ENCODE measurements at regions of chr7 and their contacts with region 1.

Region 1: GRCh38 chr7:110283082-110283481 is 807.8 kb upstream of the LRRN3 start:
- DNase-seq: peak; percentile 42 to 59
- H3K4me3 ChIP-seq: no peak overlapping the region
- H3K4me3 Mint-ChIP-seq: no peak overlapping the region
- H3K27ac Mint-ChIP-seq: no peak overlapping the region
- H3K4me1 ChIP-seq: peaks cover 30% of the 10 kb centered on the region
- H3K4me1 Mint-ChIP-seq: peaks cover 26% of the 10 kb centered on the region
- H3K27me3 ChIP-seq: no peaks in the 10 kb centered on the region
- H3K27me3 Mint-ChIP-seq: no peaks in the 10 kb centered on the region
- CTCF ChIP-seq: no peak

Region 2: DNA sequence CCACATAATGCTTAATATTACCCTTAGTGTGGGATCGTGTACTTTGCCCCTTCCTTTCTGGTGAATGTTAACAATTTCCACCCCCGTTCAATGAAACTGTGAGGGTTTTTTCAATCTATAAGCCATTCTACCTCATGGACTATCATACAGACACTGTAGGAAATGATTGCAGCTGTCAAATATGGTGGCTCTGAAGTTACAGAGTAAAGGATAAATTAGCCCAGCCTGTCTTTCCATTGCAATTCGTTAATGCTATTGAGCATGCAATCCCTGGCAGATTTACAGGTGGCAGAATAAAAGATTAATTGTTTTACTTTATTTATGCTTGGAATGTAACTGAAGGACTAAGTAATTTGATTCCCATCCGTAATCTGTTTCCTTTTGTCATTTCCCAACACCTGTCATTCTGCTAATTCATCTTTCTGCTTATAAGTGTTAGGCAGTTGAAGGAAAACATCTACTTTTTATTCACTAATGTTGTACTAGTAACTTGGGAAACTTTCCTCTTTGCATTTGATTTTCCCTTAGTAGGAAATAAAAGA is 403.7 kb before region 1 on chr7:
- CTCF ChIA-PET with region 1: no interaction called
- POLR2A ChIA-PET with region 1: no interaction called
- intact Hi-C with region 1: loop called (anchors 1 kb)
- DNase-seq: no peak
- H3K4me3 ChIP-seq: no peak overlapping the region
- H3K4me3 Mint-ChIP-seq: no peak overlapping the region
- H3K27ac Mint-ChIP-seq: no peak overlapping the region
- H3K4me1 ChIP-seq: peaks cover 7% of the 10 kb centered on the region
- H3K4me1 Mint-ChIP-seq: peaks cover 8% of the 10 kb centered on the region
- H3K27me3 ChIP-seq: no peaks in the 10 kb centered on the region
- H3K27me3 Mint-ChIP-seq: no peaks in the 10 kb centered on the region
- CTCF ChIP-seq: no peak

Region 3: GRCh38 chr7:110186331-110186730 is 96.8 kb before region 1 on chr7:
- CTCF ChIA-PET with region 1: no interaction called
- POLR2A ChIA-PET with region 1: no interaction called
- intact Hi-C with region 1: loop called (anchors 5 kb)
- DNase-seq: peak in 1 of 2 experiments; percentile 57
- H3K4me3 ChIP-seq: no peak overlapping the region
- H3K4me3 Mint-ChIP-seq: no peak overlapping the region
- H3K27ac Mint-ChIP-seq: no peak overlapping the region
- H3K4me1 ChIP-seq: peaks cover 10% of the 10 kb centered on the region
- H3K4me1 Mint-ChIP-seq: no peaks in the 10 kb centered on the region
- H3K27me3 ChIP-seq: no peaks in the 10 kb centered on the region
- H3K27me3 Mint-ChIP-seq: no peaks in the 10 kb centered on the region
- CTCF ChIP-seq: no peak

Region 4: DNA sequence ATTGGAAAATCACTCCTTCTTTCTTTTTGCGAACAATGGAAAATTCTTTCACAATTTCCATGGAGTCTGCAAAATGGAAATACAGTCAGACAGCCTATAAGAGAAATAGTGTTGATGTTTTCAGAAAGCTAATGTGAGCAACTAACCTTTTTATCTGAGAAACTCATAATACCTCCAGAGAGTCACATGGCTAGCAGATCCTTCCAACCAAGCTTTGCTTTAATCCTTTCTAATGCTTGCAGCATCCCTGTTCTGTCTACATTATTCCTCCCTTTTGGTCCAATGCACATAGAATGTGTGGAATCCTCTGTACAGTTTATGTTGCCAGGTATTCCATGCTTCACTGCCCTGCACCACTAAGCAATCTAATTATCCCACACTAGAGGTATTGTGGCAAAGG is 90.3 kb after region 1 on chr7:
- CTCF ChIA-PET with region 1: no interaction called
- POLR2A ChIA-PET with region 1: no interaction called
- intact Hi-C with region 1: loop called (anchors 1 kb)
- DNase-seq: no peak
- H3K4me3 ChIP-seq: no peak overlapping the region
- H3K4me3 Mint-ChIP-seq: no peak overlapping the region
- H3K27ac Mint-ChIP-seq: peak overlapping the region; percentile 70
- H3K4me1 ChIP-seq: peaks cover 17% of the 10 kb centered on the region
- H3K4me1 Mint-ChIP-seq: peaks cover 18% of the 10 kb centered on the region
- H3K27me3 ChIP-seq: no peaks in the 10 kb centered on the region
- H3K27me3 Mint-ChIP-seq: no peaks in the 10 kb centered on the region
- CTCF ChIP-seq: no peak

Region 5: DNA sequence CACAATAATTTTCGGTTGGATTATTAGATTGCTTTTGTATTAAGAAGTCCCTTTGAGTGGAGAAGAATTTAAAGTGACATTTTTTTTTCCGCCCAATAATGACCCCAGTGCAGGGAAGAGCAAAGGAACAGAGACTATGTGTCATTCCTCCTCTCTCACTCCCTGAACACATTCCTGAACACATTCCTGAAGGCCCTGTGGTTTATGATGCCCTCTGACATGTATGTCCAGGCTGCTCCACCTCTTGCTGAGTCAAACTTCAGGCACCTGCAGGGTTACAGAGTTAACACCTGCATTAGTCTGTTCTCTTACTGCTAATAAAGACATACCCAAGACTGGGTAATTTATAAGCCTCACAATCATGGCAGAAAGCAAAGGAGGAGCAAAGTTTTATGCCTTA is 103.8 kb after region 1 on chr7:
- CTCF ChIA-PET with region 1: no interaction called
- POLR2A ChIA-PET with region 1: no interaction called
- intact Hi-C with region 1: loop called (anchors 2 kb)
- DNase-seq: peak; percentile 65 to 81
- H3K4me3 ChIP-seq: no peak overlapping the region
- H3K4me3 Mint-ChIP-seq: no peak overlapping the region
- H3K27ac Mint-ChIP-seq: peak overlapping the region; percentile 74
- H3K4me1 ChIP-seq: peaks cover 21% of the 10 kb centered on the region
- H3K4me1 Mint-ChIP-seq: peaks cover 44% of the 10 kb centered on the region
- H3K27me3 ChIP-seq: no peaks in the 10 kb centered on the region
- H3K27me3 Mint-ChIP-seq: no peaks in the 10 kb centered on the region
- CTCF ChIP-seq: no peak

Region 6: DNA sequence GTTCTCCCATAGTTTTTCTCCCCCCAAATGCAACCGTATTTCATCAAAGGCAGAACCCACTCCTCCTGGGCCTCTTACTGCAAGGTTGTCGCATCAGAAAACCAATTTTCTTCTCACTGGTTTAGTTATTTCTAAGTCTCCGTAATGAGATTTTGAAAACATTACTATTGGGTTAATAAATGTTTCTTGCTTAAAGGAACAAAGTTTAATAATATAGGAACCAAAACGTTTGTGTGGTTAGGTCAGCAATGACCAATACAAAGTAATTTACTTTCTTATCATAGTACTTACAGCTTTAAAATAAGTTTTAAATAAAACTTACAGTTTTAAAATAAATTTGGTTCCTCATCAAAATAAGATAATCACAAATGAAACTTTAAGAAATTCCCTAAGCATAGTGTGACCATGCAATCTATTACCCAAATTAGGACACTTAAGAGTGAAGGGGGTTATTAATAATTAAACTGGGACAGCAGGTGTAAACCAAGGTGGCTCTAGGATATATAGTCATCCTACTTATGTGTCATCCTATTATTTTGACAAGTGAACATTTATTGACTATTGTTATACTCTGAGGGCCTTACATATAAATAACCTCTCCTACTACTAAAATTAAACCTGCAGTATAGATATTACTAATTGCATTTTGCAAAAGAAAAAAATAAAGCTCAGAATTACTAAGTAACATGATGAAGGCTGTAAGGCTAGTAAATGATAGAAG is 392.5 kb after region 1 on chr7:
- CTCF ChIA-PET with region 1: no interaction called
- POLR2A ChIA-PET with region 1: no interaction called
- intact Hi-C with region 1: loop called (anchors 1 kb)
- DNase-seq: no peak
- H3K4me3 ChIP-seq: no peak overlapping the region
- H3K4me3 Mint-ChIP-seq: no peak overlapping the region
- H3K27ac Mint-ChIP-seq: peak overlapping the region; percentile 96
- H3K4me1 ChIP-seq: peaks cover 29% of the 10 kb centered on the region
- H3K4me1 Mint-ChIP-seq: peaks cover 14% of the 10 kb centered on the region
- H3K27me3 ChIP-seq: no peaks in the 10 kb centered on the region
- H3K27me3 Mint-ChIP-seq: no peaks in the 10 kb centered on the region
- CTCF ChIP-seq: no peak